ENCODE measurements at regions of chr5 and their contacts with region 1.

Region 1: DNA sequence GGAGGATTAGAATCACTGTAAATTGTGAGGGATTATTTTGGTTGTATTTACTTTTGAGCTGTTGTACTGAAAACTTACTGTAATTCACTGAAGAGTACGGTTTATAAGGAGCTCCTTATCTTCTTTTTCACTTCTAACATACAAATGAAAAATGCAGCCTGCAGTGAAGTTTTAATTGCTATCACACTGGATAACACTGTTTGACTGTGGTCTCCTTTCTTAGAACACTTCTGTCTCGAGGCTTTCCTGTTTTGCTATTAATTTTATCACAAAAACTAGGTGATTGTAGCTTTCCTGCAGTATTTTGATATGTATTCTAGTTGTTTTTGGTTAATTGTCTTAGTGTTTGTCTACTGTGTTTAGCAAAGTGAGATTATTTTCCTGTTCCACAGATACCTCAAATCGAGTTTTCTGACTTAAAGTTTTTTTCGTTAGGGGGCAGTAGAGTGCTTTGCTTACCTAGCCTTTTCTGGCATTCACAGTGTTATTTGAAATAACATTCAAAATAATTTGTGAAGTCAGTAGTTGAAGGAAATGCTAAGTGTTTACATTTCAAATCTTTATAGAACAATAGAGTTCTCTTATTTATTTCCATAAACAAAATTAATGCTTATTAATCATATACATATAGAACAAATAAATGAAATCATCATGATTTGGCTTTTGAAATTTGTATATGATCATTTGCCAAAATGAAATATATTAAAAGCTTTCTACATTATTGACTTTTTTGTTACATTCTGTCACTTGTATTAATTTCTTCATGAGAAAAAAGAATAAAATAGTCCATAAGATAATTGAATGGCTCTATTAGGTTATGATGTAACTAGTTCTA is 52.9 kb downstream of the COMMD10 start:
- DNase-seq: no peak
- H3K4me3 Mint-ChIP-seq: no peak overlapping the region
- H3K27ac Mint-ChIP-seq: no peak overlapping the region
- H3K4me1 Mint-ChIP-seq: peaks cover 22% of the 10 kb centered on the region
- H3K27me3 Mint-ChIP-seq: no peaks in the 10 kb centered on the region

Region 2: GRCh38 chr5:116492016-116492623 is 354.4 kb after region 1 on chr5:
- CTCF ChIA-PET with region 1: no interaction called
- intact Hi-C with region 1: loop called (anchors 10 kb)
- DNase-seq: peak; percentile 15
- H3K4me3 Mint-ChIP-seq: no peak overlapping the region
- H3K27ac Mint-ChIP-seq: no peak overlapping the region
- H3K4me1 Mint-ChIP-seq: peaks cover 15% of the 10 kb centered on the region
- H3K27me3 Mint-ChIP-seq: no peaks in the 10 kb centered on the region

Region 3: DNA sequence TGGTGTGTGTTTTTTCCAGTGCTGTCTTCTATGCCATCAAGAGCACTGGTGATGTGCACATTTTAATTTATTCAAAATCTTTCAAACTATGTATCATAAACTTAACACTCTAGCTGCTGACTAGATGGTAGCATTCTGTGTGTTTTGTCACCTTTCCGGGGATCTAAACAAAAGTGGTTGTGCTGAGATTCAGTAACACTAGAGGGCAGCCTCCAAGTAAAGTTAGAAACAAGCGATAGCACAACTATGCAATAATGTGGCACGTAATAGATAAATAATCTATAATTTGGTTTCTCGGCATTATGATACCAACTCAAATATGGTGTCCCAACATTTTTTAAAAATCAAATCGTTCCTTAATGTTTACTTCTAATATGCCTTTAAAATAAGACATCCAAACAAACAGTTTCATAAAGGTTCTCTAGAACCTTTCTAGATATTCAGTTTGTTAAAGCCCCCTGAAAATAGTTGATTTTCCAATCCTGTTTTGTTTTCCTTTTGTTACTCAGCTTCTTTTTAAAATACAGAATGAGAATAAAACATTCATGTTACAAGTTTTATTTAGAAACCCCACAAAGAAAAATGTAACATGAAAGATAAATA is 420.0 kb after region 1 on chr5:
- CTCF ChIA-PET with region 1: no interaction called
- intact Hi-C with region 1: loop called (anchors 5 kb)
- DNase-seq: no peak
- H3K4me3 Mint-ChIP-seq: no peak overlapping the region
- H3K27ac Mint-ChIP-seq: no peak overlapping the region
- H3K4me1 Mint-ChIP-seq: no peaks in the 10 kb centered on the region
- H3K27me3 Mint-ChIP-seq: no peaks in the 10 kb centered on the region

Region 4: GRCh38 chr5:116947691-116948528 is 810.1 kb after region 1 on chr5:
- CTCF ChIA-PET with region 1: interaction called, 6 read pairs
- intact Hi-C with region 1: loop called (anchors 1 kb)
- DNase-seq: peak; percentile 79
- H3K4me3 Mint-ChIP-seq: no peak overlapping the region
- H3K27ac Mint-ChIP-seq: no peak overlapping the region
- H3K4me1 Mint-ChIP-seq: no peaks in the 10 kb centered on the region
- H3K27me3 Mint-ChIP-seq: peaks cover 2% of the 10 kb centered on the region

Measured in activated naive CD4-positive, alpha-beta T cell treated with anti-CD3 and anti-CD28 coated beads for 36 hours (primary cell).